Activated CD4-positive, alpha-beta T cell treated with anti-CD3 and anti-CD28 coated beads, Interleukin-2, amount 10 ng/mL, durations not matched to agents 24 days and 14 days (primary cell): ENCODE measurements at regions of chr21 and their contacts with region 1.

Region 1: DNA sequence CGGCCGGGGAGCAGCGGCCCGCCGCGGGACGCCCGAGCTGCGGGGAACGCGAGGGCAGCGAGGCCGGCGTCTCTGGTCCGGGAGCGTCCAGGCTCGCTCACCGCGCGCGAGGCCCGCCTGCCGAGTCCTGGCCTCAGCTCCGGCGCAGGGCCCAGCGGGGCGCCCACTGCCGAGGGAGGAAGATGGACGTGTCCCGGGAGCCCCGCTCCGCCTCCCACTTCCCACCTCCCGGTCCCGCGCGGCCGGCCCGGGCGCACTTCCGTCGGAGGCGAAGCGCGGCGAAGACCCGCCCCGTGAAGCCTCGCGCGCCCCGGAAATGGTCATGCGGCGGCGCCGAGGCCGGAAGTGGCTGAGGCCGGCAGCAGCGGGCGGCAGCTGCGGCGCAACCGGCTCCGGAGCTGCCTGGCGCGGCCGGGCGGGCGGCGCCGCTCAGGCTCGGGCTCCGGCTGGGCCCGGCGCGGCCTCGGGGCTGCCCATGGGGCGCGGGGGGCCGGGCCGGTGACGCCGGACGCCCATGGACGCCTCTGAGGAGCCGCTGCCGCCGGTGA is at the start of gene TRAPPC10:
- DNase-seq: peak; percentile 97
- H3K4me3 Mint-ChIP-seq: peak within 1 kb of the TSS; percentile 94
- H3K27ac Mint-ChIP-seq: peak within 1 kb of the TSS; percentile 93
- H3K4me1 Mint-ChIP-seq: peaks cover 44% of the 10 kb centered on the region
- H3K27me3 Mint-ChIP-seq: peaks cover 3% of the 10 kb centered on the region
- total RNA-seq, gene TRAPPC10: 69.6 and 75.0 TPM in 2 replicates

Region 2: GRCh38 chr21:42892931-42893755 is 1118.9 kb before region 1 on chr21 and contains the start of gene NDUFV3:
- intact Hi-C with region 1: loop called (anchors 5 kb)
- DNase-seq: peak; percentile 99
- H3K4me3 Mint-ChIP-seq: peak within 1 kb of the TSS; percentile 96
- H3K27ac Mint-ChIP-seq: peak within 1 kb of the TSS; percentile 98
- H3K4me1 Mint-ChIP-seq: peaks cover 8% of the 10 kb centered on the region
- H3K27me3 Mint-ChIP-seq: no peaks in the 10 kb centered on the region
- total RNA-seq, gene NDUFV3: 41.2 and 41.7 TPM in 2 replicates

Region 3: GRCh38 chr21:43866260-43866629 is 145.8 kb before region 1 on chr21:
- intact Hi-C with region 1: loop called (anchors 2 kb)
- DNase-seq: peak; percentile 77
- H3K4me3 Mint-ChIP-seq: peak overlapping the region; percentile 90
- H3K27ac Mint-ChIP-seq: peak overlapping the region; percentile 94
- H3K4me1 Mint-ChIP-seq: peaks cover 36% of the 10 kb centered on the region
- H3K27me3 Mint-ChIP-seq: no peaks in the 10 kb centered on the region

Region 4: GRCh38 chr21:44057960-44058651 is 46.1 kb after region 1 on chr21:
- intact Hi-C with region 1: loop called (anchors 2 kb)
- DNase-seq: peak; percentile 65
- H3K4me3 Mint-ChIP-seq: peak overlapping the region; percentile 62
- H3K27ac Mint-ChIP-seq: peak overlapping the region; percentile 89
- H3K4me1 Mint-ChIP-seq: peaks cover 31% of the 10 kb centered on the region
- H3K27me3 Mint-ChIP-seq: no peaks in the 10 kb centered on the region

Region 5: GRCh38 chr21:44299458-44300261 is 287.6 kb after region 1 on chr21 and contains the start of gene PFKL:
- intact Hi-C with region 1: loop called (anchors 5 kb)
- DNase-seq: peak; percentile 91
- H3K4me3 Mint-ChIP-seq: peak within 1 kb of the TSS; percentile 91
- H3K27ac Mint-ChIP-seq: peak within 1 kb of the TSS; percentile 98
- H3K4me1 Mint-ChIP-seq: peaks cover 37% of the 10 kb centered on the region
- H3K27me3 Mint-ChIP-seq: no peaks in the 10 kb centered on the region
- total RNA-seq, gene PFKL: 157 and 162 TPM in 2 replicates

Region 6: GRCh38 chr21:44593598-44594405 is 581.7 kb after region 1 on chr21:
- intact Hi-C with region 1: no loop called
- DNase-seq: no peak
- H3K4me3 Mint-ChIP-seq: no peak overlapping the region
- H3K27ac Mint-ChIP-seq: no peak overlapping the region
- H3K4me1 Mint-ChIP-seq: no peaks in the 10 kb centered on the region
- H3K27me3 Mint-ChIP-seq: peaks cover 7% of the 10 kb centered on the region